Cardiac septum (tissue), 1 donor: ENCODE measurements at regions of chr1 and their contacts with region 1.

Region 1: DNA sequence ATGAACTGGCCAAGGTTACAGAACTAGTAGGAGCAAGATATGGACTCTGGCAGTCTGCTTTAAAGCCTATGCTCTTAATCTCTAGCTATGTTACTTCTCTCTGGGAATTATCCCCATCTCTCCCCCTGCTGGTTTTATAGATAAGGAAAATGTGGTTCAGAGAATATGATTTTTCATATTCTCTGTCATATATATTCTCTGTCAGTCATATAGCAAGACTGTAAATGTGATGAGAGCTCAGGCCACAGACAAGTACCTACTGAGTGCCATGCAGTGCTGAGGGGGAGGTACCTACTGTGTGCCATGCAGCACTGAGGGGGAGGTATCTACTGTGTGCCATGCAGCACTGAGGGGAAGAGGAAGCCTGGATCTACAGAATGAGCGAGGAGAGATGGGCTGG is 220.3 kb upstream of the FGGY start:
- DNase-seq: no peak

Region 2: DNA sequence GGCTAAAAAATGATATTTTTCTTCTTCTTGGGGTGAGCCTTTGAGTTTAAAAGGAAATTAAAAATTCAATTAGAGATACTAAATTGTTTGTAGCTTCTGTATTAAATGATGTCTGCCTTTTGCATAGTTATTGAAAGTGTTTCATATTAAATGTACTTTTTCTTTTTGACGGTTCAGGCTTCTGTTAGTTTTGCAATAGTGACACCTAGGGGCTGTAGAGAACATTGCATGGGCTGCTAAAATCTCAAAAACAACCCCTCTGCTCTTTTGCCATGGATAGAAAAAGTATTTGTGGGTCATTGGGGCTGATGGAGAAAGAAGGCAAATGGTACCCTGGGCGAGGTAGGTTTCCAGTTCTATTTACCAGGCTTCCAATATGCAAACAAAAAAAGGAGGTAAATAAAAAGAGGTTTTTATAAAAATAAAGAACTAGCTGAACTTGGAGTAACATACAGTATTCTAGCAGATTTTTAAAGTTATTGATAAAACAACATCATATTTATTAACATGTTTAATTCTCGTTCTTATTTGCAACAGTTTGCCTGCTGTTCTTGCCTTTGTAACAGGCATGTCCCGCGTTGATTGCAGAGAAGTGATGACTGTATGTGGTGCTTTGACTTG is 622.7 kb after region 1 on chr1:
- intact Hi-C with region 1: loop called (anchors 10 kb)
- DNase-seq: no peak